CD4-positive, alpha-beta T cell (primary cell): ENCODE measurements at regions of chr5 and their contacts with region 1.

Region 1: DNA sequence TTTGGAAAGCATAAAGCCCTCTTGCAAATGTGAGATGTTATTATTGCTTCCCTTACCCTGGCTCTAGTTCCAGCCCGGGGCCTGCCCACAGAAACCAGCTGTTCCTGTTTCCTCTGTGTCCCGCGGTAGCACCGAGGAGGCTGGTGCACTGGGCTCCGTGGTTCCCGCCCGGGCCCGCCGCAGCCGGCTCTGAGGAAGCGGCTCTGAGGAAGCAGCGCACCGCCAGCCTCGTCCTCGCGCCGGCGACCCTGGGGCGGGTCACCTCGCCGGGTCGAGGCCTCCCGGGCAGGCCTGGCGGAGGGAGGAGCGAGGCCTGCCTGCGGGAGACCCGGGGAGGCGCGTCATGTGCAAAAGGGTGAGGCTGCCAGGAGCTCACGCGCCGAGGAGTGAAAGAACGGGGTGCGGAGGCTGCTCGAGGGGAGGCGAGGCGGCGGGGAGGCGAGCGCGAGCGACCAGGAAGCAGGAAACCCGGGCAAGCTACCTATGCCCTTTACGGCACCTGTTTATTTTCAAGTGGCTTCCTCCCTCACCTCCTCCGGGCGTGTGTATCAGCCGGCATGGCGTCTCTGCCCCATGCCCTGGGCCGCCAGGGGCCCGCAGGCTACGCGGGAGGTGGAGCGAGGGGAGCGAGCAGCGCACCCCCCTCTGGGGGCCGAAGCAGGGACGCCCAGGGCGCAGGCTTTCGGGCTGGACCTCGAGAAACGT is 61.3 kb upstream of the MEGF10 start:
- DNase-seq: peak; percentile 25 to 72 (median 50)
- ATAC-seq: peak; percentile 84
- H3K4me3 ChIP-seq: peak overlapping the region; percentile 63
- H3K4me3 Mint-ChIP-seq: peak overlapping the region; percentile 87
- H3K27ac ChIP-seq: peak overlapping the region; percentile 62 to 63
- H3K27ac Mint-ChIP-seq: peak overlapping the region; percentile 55
- H3K4me1 ChIP-seq: peaks cover 16% of the 10 kb centered on the region
- H3K4me1 Mint-ChIP-seq: peaks cover 23% of the 10 kb centered on the region
- H3K27me3 ChIP-seq: no peaks in the 10 kb centered on the region
- H3K27me3 Mint-ChIP-seq: no peaks in the 10 kb centered on the region
- CTCF ChIP-seq: no peak

Region 2: DNA sequence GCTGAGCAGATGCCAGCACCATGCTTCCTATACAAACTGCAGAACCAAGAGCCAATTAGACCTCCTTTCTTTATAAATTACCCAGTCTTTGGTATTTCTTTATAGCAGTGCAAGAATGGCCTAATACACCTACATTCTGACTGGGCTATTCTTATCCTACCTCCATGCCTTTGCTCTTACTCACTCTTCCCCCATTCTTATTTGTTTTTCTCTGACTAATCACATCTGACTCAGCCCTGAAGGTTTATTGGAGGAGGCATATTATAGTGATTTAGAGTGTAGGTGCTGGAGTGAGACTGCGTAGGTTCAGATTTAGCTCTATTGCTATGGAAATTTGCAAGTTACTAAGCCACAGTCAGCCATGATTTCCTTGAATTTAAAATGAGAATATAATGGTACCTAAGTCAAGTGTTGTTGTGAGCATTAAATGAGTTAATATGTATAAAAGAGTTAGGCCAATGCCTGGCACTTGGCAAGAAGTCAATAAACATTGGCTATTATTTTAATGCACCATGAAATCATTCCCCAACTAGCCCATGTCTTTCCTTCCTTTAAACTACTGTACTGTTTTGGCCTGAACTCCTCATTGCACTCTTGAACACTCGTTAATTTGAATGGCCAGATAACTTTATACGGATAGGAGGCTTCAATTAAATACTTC is 1951.7 kb before region 1 on chr5:
- CTCF ChIA-PET with region 1: no interaction called
- POLR2A ChIA-PET with region 1: no interaction called
- intact Hi-C with region 1: no loop called
- DNase-seq: no peak
- ATAC-seq: no peak
- H3K4me3 ChIP-seq: no peak overlapping the region
- H3K4me3 Mint-ChIP-seq: no peak overlapping the region
- H3K27ac ChIP-seq: no peak overlapping the region
- H3K27ac Mint-ChIP-seq: no peak overlapping the region
- H3K4me1 ChIP-seq: no peaks in the 10 kb centered on the region
- H3K4me1 Mint-ChIP-seq: no peaks in the 10 kb centered on the region
- H3K27me3 ChIP-seq: no peaks in the 10 kb centered on the region
- H3K27me3 Mint-ChIP-seq: no peaks in the 10 kb centered on the region
- CTCF ChIP-seq: no peak

Region 3: GRCh38 chr5:126552614-126553013 is 676.7 kb before region 1 on chr5:
- CTCF ChIA-PET with region 1: no interaction called
- POLR2A ChIA-PET with region 1: no interaction called
- intact Hi-C with region 1: no loop called
- DNase-seq: no peak
- ATAC-seq: no peak
- H3K4me3 ChIP-seq: no peak overlapping the region
- H3K4me3 Mint-ChIP-seq: no peak overlapping the region
- H3K27ac ChIP-seq: no peak overlapping the region
- H3K27ac Mint-ChIP-seq: no peak overlapping the region
- H3K4me1 ChIP-seq: no peaks in the 10 kb centered on the region
- H3K4me1 Mint-ChIP-seq: no peaks in the 10 kb centered on the region
- H3K27me3 ChIP-seq: no peaks in the 10 kb centered on the region
- H3K27me3 Mint-ChIP-seq: no peaks in the 10 kb centered on the region
- CTCF ChIP-seq: no peak

Region 4: DNA sequence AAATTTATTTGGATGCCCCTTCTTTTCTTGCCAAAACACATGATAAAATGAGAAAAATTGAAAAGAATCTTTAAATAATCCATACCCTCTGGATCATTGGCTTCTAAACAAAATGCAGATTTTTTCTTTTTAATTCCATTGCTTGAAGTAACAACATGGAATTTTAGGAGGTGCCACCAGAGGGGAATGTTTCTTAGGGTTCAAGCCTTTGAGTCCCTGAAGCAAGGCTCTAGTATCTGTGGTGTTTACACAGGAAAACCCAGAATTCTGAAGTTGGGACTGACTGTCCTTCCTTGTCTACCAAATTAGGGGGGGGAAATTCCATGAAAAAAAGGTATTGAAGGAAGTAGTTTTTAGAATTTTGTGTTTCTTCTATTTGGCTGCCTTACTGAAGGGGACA is 383.0 kb before region 1 on chr5:
- CTCF ChIA-PET with region 1: no interaction called
- POLR2A ChIA-PET with region 1: interaction called, 10 read pairs
- intact Hi-C with region 1: loop called in 1 of 2 experiments (anchors 10 kb)
- DNase-seq: no peak
- ATAC-seq: no peak
- H3K4me3 ChIP-seq: no peak overlapping the region
- H3K4me3 Mint-ChIP-seq: no peak overlapping the region
- H3K27ac ChIP-seq: peak overlapping the region in 1 of 2 donors; percentile 24
- H3K27ac Mint-ChIP-seq: peak overlapping the region; percentile 90
- H3K4me1 ChIP-seq: peaks cover 13% of the 10 kb centered on the region
- H3K4me1 Mint-ChIP-seq: peaks cover 37% of the 10 kb centered on the region
- H3K27me3 ChIP-seq: no peaks in the 10 kb centered on the region
- H3K27me3 Mint-ChIP-seq: no peaks in the 10 kb centered on the region
- CTCF ChIP-seq: no peak

Region 5: GRCh38 chr5:127072861-127073846 is 156.2 kb before region 1 on chr5 and contains the start of gene C5orf63:
- CTCF ChIA-PET with region 1: no interaction called
- POLR2A ChIA-PET with region 1: interaction called, 10 read pairs
- intact Hi-C with region 1: no loop called
- DNase-seq: peak; percentile 31 to 84 (median 56)
- ATAC-seq: peak; percentile 93
- H3K4me3 ChIP-seq: peak within 1 kb of the TSS; percentile 62
- H3K4me3 Mint-ChIP-seq: peak within 1 kb of the TSS; percentile 92
- H3K27ac ChIP-seq: peak within 1 kb of the TSS in 1 of 2 donors; percentile 4
- H3K27ac Mint-ChIP-seq: peak within 1 kb of the TSS; percentile 85
- H3K4me1 ChIP-seq: peaks cover 10% of the 10 kb centered on the region
- H3K4me1 Mint-ChIP-seq: peaks cover 34% of the 10 kb centered on the region
- H3K27me3 ChIP-seq: no peaks in the 10 kb centered on the region
- H3K27me3 Mint-ChIP-seq: no peaks in the 10 kb centered on the region
- CTCF ChIP-seq: no peak
- total RNA-seq, gene C5orf63: 5.1 to 5.7 TPM

Region 6: DNA sequence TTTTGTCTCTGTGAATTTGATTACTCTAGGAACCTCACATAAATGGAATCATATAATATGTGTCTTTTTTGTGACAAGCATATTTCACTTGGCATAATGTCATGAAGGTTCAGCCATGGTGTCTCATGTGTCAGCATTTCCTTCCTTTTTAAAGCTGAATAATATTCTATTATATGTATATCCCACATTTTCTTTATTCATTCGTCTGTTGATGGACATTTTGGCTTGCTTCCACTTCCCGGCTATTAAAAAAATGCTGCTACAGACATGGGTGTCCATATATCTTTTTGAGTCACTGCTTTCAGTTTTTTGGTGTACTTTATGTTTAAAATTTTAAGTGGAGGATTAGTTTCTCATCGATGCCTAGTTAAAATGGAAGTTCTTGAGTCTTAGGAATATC is 96.3 kb before region 1 on chr5:
- CTCF ChIA-PET with region 1: no interaction called
- POLR2A ChIA-PET with region 1: no interaction called
- intact Hi-C with region 1: no loop called
- DNase-seq: no peak
- ATAC-seq: no peak
- H3K4me3 ChIP-seq: no peak overlapping the region
- H3K4me3 Mint-ChIP-seq: no peak overlapping the region
- H3K27ac ChIP-seq: no peak overlapping the region
- H3K27ac Mint-ChIP-seq: no peak overlapping the region
- H3K4me1 ChIP-seq: no peaks in the 10 kb centered on the region
- H3K4me1 Mint-ChIP-seq: no peaks in the 10 kb centered on the region
- H3K27me3 ChIP-seq: no peaks in the 10 kb centered on the region
- H3K27me3 Mint-ChIP-seq: no peaks in the 10 kb centered on the region
- CTCF ChIP-seq: no peak

Region 7: DNA sequence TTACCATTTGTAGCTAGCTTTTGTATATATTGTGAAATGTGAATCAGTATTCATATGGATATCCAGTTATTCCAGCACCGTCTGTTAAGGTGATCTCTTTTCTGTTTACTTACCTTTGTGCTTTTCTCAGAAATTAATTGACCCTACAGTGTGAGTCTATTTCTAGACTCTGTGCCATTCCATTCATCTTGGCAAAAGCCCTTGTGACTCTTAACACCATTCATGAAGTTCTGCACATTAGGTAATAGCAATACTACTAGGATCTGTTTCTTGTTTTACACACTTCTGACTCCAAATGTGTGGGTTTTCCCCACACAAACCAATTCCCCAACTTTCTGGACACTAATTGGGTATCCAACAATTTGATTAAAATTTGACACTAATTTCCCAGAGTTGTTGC is 894.6 kb after region 1 on chr5:
- CTCF ChIA-PET with region 1: no interaction called
- POLR2A ChIA-PET with region 1: no interaction called
- intact Hi-C with region 1: no loop called
- DNase-seq: no peak
- ATAC-seq: no peak
- H3K4me3 ChIP-seq: no peak overlapping the region
- H3K4me3 Mint-ChIP-seq: no peak overlapping the region
- H3K27ac ChIP-seq: no peak overlapping the region
- H3K27ac Mint-ChIP-seq: no peak overlapping the region
- H3K4me1 ChIP-seq: no peaks in the 10 kb centered on the region
- H3K4me1 Mint-ChIP-seq: no peaks in the 10 kb centered on the region
- H3K27me3 ChIP-seq: no peaks in the 10 kb centered on the region
- H3K27me3 Mint-ChIP-seq: no peaks in the 10 kb centered on the region
- CTCF ChIP-seq: no peak